Activated CD8-positive, alpha-beta T cell treated with anti-CD3 and anti-CD28 coated beads, Interleukin-2, amount 10 ng/mL, durations not matched to agents 7 days and 5 days (primary cell): ENCODE measurements at regions of chr1 and their contacts with region 1.

Region 1: GRCh38 chr1:52636721-52637695 is 4.0 kb downstream of the SHISAL2A start:
- DNase-seq: peak; percentile 84
- ATAC-seq: peak; percentile 68
- H3K4me3 Mint-ChIP-seq: peak overlapping the region; percentile 59
- H3K27ac Mint-ChIP-seq: peak overlapping the region; percentile 97
- H3K4me1 Mint-ChIP-seq: peaks cover 76% of the 10 kb centered on the region
- H3K27me3 Mint-ChIP-seq: no peaks in the 10 kb centered on the region

Region 2: DNA sequence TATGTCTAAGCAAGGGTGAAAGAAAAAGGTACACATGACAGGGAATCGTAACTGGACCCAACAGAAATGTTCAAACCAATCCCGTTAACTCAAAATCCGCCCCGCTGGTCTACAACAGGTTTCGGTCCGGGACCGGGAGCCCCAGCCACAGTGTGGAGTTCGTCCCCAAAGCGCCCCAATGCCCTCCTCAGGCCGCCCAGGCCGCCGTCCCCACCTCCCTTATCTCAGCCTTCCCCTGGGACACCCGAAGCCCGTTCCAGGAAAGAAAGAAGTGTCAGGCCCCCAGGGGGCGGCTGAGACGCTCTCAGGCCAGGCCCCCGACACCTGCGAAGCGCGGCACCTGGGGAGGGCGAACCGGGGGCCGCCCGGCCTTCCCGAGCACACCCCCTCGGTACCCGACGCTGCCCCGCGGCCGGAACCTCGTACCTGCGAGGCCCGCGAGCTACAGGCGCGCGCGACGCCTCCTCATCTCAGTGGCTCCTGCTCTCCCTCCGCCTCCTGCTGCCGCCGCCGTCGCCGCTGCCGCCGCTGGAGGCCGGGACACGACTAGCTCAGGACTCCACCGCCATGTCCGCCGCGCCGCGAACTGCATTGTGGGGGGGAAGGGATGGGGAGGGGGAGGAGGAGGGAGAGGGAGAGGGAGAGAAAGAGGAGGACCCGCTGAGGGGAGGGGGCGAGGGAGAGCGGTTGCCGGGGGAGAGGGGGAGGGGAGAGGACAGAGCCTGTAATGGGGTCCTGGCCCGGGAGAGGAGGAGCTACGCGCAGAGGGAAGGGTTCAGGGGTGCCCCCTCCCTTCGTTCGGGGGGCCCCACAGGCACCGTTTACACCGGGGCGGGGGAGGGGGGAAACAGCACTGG is 84.3 kb before region 1 on chr1 and contains the start of gene TUT4:
- CTCF ChIA-PET with region 1: interaction called, 3 read pairs
- POLR2A ChIA-PET with region 1: interaction called, 22 read pairs
- DNase-seq: peak; percentile 82
- ATAC-seq: peak; percentile 68
- H3K4me3 Mint-ChIP-seq: peak within 1 kb of the TSS; percentile 65
- H3K27ac Mint-ChIP-seq: peak within 1 kb of the TSS; percentile 61
- H3K4me1 Mint-ChIP-seq: peaks cover 23% of the 10 kb centered on the region
- H3K27me3 Mint-ChIP-seq: peaks cover 10% of the 10 kb centered on the region
- total RNA-seq, gene TUT4: 58.5 to 65.9 TPM

Region 3: GRCh38 chr1:52604063-52604770 is 32.8 kb before region 1 on chr1:
- CTCF ChIA-PET with region 1: interaction called, 10 read pairs
- POLR2A ChIA-PET with region 1: interaction called, 10 read pairs
- DNase-seq: no peak
- ATAC-seq: no peak
- H3K4me3 Mint-ChIP-seq: peak overlapping the region; percentile 75
- H3K27ac Mint-ChIP-seq: peak overlapping the region; percentile 2
- H3K4me1 Mint-ChIP-seq: peaks cover 31% of the 10 kb centered on the region
- H3K27me3 Mint-ChIP-seq: no peaks in the 10 kb centered on the region

Region 4: DNA sequence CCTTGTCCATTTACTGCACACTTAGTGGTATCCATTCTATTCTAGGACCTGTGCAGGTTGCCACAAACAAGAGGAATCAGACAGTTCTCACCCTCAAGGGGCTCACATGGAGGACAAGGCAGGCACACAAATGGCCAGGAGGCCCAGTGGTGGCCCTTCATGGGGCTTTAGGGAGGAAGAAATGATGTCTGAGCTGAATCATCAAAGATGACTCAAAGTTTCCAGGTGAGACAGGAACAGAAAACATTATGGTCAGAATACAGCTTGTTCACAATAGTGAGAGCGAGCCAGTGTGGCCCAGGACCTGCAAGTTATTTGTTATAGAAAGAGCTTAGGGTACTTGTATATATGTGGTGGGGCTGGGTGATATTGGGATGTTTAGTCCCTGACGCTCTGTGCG is 22.3 kb after region 1 on chr1:
- CTCF ChIA-PET with region 1: interaction called, 16 read pairs
- POLR2A ChIA-PET with region 1: interaction called, 10 read pairs
- DNase-seq: peak; percentile 35
- ATAC-seq: peak; percentile 51
- H3K4me3 Mint-ChIP-seq: no peak overlapping the region
- H3K27ac Mint-ChIP-seq: peak overlapping the region; percentile 70
- H3K4me1 Mint-ChIP-seq: peaks cover 14% of the 10 kb centered on the region
- H3K27me3 Mint-ChIP-seq: no peaks in the 10 kb centered on the region

Region 5: DNA sequence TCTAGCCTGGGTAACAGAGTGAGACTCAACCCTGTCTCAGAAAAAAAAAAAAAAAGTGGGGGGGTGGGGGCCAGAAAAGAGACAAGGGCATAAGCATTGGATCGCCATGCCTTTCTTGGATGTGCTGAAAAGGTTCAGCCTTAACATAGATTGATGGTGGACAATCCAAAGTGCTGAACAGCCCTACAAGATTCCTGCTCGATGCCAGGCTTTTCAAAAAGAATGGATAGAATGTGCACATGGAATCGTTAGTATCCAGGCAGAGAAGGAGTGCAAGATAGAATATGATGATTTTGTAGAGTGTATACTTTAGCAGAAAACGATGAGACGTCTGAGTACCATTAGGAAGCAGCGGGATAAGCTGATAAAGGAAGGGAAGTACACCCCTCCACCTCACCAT is 72.0 kb after region 1 on chr1:
- CTCF ChIA-PET with region 1: no interaction called
- POLR2A ChIA-PET with region 1: no interaction called
- DNase-seq: no peak
- ATAC-seq: no peak
- H3K4me3 Mint-ChIP-seq: no peak overlapping the region
- H3K27ac Mint-ChIP-seq: no peak overlapping the region
- H3K4me1 Mint-ChIP-seq: peaks cover 9% of the 10 kb centered on the region
- H3K27me3 Mint-ChIP-seq: peaks cover 12% of the 10 kb centered on the region